BJ (cell line): ENCODE measurements at regions of chr11 and their contacts with region 1.

Region 1: GRCh38 chr11:17354601-17354991 is 3.0 kb downstream of the NCR3LG1 start:
- DNase-seq: peak; percentile 19
- H3K4me3 ChIP-seq: no peak overlapping the region
- H3K27me3 ChIP-seq: no peaks in the 10 kb centered on the region
- CTCF ChIP-seq: peak; percentile 67

Region 2: DNA sequence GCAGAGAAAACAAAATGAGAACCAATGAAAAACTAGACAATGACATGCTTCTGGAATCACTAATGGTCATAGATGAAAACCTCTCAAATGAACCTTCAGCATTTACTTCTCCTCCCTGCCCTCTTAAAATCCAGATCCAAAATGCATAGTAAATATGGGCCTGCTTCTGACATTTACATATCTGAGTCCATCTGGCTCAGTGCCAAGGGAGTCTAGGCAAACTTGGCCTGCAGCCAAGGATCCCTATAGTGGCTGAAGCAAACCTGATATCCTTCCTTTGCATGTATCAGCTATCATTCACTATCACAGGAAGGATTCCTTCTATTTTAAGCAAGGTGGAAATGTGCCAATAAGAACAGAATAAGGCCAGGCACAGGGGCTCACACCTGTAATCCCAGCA is 511.3 kb before region 1 on chr11:
- CTCF ChIA-PET with region 1: no interaction called
- POLR2A ChIA-PET with region 1: no interaction called
- DNase-seq: no peak
- H3K4me3 ChIP-seq: no peak overlapping the region
- H3K27me3 ChIP-seq: no peaks in the 10 kb centered on the region
- CTCF ChIP-seq: no peak

Region 3: DNA sequence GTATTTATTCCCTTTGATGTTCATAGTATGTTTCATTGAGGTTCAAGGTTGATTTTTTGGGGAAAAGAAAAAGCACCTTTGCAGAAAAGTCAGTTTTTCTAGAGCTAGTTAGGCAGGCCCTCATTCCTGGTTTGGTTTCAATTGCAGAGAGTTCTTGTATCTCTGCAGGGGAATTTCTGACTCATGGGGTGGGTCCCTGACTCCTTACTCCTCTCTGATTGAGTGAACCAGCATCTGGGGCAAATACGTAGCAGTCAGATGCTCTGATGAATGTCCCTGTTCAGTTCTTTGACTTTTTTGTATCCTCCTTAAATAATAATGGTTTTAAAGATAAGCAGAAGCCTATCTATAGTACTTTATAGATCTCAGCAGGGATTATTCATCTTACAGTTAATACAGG is 10.7 kb before region 1 on chr11:
- CTCF ChIA-PET with region 1: interaction called, 13 read pairs
- POLR2A ChIA-PET with region 1: interaction called, 26 read pairs
- DNase-seq: peak; percentile 38
- H3K4me3 ChIP-seq: no peak overlapping the region
- H3K27me3 ChIP-seq: no peaks in the 10 kb centered on the region
- CTCF ChIP-seq: no peak

Region 4: DNA sequence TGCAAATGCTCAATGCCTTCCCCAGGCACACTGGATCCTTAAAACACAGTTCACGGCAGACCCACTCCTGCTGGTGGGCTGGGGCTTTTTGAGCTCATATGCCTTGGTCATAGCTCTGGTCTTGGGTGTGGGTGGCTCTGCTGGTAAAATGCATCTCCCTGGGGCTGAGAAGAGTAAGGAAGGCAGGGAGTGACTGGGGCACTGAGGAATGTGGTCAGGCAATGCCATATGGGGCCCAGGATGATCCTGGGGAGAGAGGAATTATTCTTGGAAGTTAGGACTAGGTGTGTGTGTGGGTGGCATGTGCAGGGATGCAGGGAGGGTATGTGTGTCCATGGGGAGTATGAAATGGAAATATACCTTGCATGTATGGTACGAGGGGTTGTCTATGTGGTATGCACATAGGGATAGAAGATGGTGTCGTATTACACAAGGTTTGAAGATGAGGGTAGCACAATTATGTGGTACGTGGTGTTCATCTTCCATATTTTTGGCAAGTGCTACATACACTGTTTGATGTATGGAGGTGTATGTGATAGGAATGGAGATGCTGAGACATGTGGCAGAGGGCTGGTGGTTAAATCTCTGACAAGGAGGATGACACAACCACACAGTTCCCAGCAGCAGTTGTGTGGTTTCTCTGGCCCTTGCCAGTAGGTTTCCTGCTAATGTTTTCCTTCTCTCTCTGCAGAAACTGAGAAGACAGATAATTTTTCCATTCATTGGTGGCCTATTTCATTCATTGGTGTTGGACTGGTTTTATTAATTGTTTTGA is 13.8 kb after region 1 on chr11:
- CTCF ChIA-PET with region 1: interaction called, 42 read pairs
- POLR2A ChIA-PET with region 1: interaction called, 3 read pairs
- DNase-seq: no peak
- H3K4me3 ChIP-seq: no peak overlapping the region
- H3K27me3 ChIP-seq: no peaks in the 10 kb centered on the region
- CTCF ChIP-seq: no peak

Region 5: GRCh38 chr11:17563248-17563647 is 208.7 kb after region 1 on chr11:
- CTCF ChIA-PET with region 1: no interaction called
- POLR2A ChIA-PET with region 1: no interaction called
- DNase-seq: no peak
- H3K4me3 ChIP-seq: no peak overlapping the region
- H3K27me3 ChIP-seq: peaks cover 2% of the 10 kb centered on the region; the same call in 1 of the 2 replicates
- CTCF ChIP-seq: no peak

Region 6: DNA sequence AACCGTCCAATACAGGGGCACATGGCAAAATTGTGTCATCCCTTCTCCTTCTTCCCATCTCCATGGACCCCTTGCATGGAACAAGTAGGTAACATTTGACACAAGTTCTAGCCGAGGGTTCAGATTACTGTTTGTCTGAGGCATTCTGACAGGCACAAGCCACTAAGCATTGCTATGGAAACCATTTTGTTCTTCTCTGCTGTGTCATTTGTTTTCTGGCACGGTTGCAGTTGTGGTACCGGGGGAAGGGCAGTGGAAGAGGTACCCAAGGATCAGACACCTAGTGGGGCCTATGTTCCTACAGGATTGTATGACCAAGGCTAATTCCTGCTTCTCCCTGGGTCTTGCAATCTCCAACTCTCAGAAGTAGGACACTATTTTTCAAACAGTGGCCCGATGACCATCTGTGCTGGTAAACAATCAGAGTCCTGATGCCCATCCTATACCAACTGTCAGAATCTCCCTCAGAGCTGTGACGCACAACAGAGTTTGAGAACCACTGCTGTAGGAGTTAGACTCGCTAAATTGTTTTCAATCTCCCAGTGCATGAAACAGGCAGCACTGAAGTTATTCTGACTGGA is 449.2 kb after region 1 on chr11:
- CTCF ChIA-PET with region 1: no interaction called
- POLR2A ChIA-PET with region 1: no interaction called
- DNase-seq: no peak
- H3K4me3 ChIP-seq: no peak overlapping the region
- H3K27me3 ChIP-seq: no peaks in the 10 kb centered on the region
- CTCF ChIP-seq: no peak